ENCODE measurements at regions of chr6 and their contacts with region 1.

Region 1: GRCh38 chr6:135183532-135184440 is 2.7 kb downstream of the MYB start:
- DNase-seq: peak; percentile 79
- H3K4me3 Mint-ChIP-seq: peak overlapping the region; percentile 97
- H3K27ac Mint-ChIP-seq: peak overlapping the region; percentile 94
- H3K4me1 Mint-ChIP-seq: peaks cover 41% of the 10 kb centered on the region
- H3K27me3 Mint-ChIP-seq: no peaks in the 10 kb centered on the region

Region 2: DNA sequence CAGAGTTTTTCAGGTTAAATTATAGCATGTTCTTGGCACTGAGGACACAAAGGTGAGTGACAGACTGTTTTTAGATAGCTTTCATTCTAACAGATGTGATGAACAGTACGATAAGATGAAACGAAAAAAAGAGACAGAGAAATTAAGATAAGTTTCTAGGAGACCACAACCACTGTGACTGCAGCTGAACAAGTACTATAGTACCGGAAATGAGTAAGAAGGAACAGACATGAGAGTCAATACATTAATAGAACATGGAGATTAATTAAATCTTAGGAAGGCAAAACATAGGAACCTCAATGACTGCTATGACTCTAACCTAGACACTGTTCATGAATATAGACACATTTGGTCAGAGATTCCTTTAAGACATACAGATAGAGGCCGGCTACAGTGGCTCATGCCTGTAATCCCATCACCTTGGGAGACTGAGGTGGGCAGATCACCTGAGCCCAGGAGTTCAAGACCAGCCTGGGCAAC is 169.4 kb before region 1 on chr6:
- intact Hi-C with region 1: loop called (anchors 2 kb)
- DNase-seq: no peak
- H3K4me3 Mint-ChIP-seq: peak overlapping the region; percentile 30
- H3K27ac Mint-ChIP-seq: peak overlapping the region; percentile 91
- H3K4me1 Mint-ChIP-seq: peaks cover 57% of the 10 kb centered on the region
- H3K27me3 Mint-ChIP-seq: no peaks in the 10 kb centered on the region

Region 3: GRCh38 chr6:135088818-135089809 is 94.7 kb before region 1 on chr6:
- intact Hi-C with region 1: loop called (anchors 1 kb)
- DNase-seq: peak; percentile 44
- H3K4me3 Mint-ChIP-seq: peak overlapping the region; percentile 30
- H3K27ac Mint-ChIP-seq: peak overlapping the region; percentile 92
- H3K4me1 Mint-ChIP-seq: peaks cover 85% of the 10 kb centered on the region
- H3K27me3 Mint-ChIP-seq: no peaks in the 10 kb centered on the region

Region 4: GRCh38 chr6:135162678-135163439 is 20.9 kb before region 1 on chr6:
- intact Hi-C with region 1: loop called (anchors 1 kb)
- DNase-seq: no peak
- H3K4me3 Mint-ChIP-seq: peak overlapping the region; percentile 31
- H3K27ac Mint-ChIP-seq: peak overlapping the region; percentile 98
- H3K4me1 Mint-ChIP-seq: peaks cover 66% of the 10 kb centered on the region
- H3K27me3 Mint-ChIP-seq: no peaks in the 10 kb centered on the region

Region 5: DNA sequence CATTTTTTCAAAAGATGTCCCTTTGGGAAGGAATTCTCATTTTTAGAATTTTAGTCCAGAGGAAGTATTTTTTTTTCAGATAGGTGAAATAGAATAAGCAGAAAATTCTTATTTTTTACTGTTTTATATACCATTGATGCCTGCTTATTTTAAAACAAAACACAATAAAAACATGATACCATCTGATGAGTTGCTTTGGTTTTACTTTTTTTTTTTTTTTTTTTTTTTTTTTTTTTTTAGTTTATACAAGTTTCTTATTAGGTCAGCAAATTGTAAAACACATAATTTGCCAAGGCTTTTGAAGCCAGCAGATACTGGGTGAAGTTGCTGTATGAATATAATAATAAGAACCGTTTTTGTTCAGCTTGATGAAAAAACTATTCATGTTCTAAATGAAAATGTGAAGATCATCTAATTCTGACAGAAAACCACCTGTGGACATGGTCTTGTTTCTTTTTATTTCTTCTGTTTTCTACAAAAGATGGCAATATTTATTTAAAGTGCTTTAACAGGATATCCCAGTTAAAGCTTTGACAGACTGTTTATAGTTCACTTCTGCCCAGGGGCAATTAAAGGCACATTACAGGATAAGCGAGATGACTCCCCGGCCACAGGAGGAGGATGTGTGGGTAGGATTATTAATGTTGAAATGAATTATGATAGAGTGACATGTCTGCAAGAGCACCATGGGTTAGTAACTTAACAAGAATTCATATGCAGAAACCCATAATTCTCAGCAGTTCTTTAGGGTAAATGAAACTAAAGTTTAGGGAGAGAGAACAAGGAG is 28.4 kb after region 1 on chr6:
- intact Hi-C with region 1: loop called (anchors 2 kb)
- DNase-seq: no peak
- H3K4me3 Mint-ChIP-seq: peak overlapping the region; percentile 38
- H3K27ac Mint-ChIP-seq: peak overlapping the region; percentile 88
- H3K4me1 Mint-ChIP-seq: peaks cover 51% of the 10 kb centered on the region
- H3K27me3 Mint-ChIP-seq: no peaks in the 10 kb centered on the region

Region 6: DNA sequence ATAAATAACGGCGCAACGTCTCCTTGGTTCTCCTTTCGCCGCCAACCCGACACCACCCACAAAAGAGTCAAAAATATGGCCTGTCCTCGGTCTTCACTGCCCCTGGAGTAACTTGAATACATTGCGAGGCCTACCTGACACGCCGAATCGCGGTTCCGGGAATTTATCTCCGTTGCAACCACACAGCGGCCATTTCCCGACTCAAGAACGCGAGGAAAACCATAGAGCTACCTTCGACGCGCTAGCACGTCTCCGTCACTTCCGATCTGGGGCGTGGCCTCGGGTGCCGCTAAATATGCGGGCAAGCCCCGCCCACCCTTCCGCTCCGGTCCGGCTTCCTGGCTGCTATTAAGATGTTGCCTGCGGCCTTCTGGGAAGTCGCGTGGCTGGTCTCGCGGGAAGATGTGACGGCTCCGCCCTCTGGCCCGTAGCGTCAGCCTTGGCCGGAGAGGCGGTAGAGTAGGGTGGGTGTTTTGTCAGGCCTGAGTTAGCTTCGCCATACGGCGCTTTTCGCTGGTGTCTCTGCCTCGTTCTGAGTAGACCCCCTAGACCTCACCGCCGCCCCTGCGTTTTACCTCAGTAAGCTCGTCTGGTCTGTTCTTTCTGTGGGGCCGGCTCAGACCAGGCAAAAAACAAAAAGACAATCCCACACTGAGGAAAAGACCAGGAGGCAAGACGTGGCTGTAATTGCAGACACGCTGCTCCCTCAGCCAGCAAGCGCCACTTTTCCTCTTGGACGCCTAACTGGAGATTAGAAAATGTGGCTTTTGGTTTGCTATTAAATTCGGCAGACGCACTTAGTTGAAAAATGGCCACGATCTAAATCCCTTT is 1106.0 kb after region 1 on chr6 and contains the start of gene BCLAF1:
- intact Hi-C with region 1: loop called (anchors 10 kb)
- DNase-seq: peak; percentile 100
- H3K4me3 Mint-ChIP-seq: peak within 1 kb of the TSS; percentile 100
- H3K27ac Mint-ChIP-seq: peak within 1 kb of the TSS; percentile 100
- H3K4me1 Mint-ChIP-seq: peaks cover 32% of the 10 kb centered on the region
- H3K27me3 Mint-ChIP-seq: no peaks in the 10 kb centered on the region
- total RNA-seq, gene BCLAF1: 228 and 242 TPM in 2 replicates